Right cardiac atrium (tissue), 5 donors: ENCODE measurements at regions of chr12 and their contacts with region 1.

Region 1: DNA sequence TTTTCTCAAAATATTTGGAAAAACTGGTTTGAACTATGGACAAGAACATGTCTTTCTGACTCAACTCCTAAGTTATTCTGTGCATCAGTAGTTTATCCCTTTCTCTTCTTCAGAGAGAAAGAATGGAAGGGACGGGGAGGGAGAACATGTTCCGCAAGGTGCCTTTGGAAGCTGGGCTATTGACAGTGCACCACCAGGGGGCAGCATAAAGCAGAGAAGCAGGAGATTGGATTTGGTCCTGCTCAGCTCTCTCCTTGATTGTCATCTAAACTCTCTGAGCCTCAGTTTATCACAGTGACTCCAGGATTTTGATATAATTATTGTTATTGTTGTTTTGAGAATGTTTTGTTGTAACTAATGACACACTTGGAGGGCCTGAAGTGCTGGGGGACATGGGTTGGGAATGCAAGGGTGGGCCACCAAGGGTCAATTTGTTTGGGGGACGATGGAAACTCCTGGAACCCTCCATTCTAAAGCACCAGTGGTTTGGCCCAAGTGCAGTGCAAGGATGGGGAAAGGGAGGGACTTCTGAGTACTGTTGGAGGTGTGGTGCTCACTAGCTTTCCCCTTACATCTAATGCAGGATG is 45.3 kb upstream of the ANO6 start:
- DNase-seq: peak; percentile 81 to 87 (median 83)
- ATAC-seq: peak; percentile 77 to 82
- H3K4me3 ChIP-seq: no peak overlapping the region
- H3K27ac ChIP-seq: no peak overlapping the region
- H3K4me1 ChIP-seq: peaks cover 4% of the 10 kb centered on the region
- H3K27me3 ChIP-seq: no peaks in the 10 kb centered on the region

Region 2: DNA sequence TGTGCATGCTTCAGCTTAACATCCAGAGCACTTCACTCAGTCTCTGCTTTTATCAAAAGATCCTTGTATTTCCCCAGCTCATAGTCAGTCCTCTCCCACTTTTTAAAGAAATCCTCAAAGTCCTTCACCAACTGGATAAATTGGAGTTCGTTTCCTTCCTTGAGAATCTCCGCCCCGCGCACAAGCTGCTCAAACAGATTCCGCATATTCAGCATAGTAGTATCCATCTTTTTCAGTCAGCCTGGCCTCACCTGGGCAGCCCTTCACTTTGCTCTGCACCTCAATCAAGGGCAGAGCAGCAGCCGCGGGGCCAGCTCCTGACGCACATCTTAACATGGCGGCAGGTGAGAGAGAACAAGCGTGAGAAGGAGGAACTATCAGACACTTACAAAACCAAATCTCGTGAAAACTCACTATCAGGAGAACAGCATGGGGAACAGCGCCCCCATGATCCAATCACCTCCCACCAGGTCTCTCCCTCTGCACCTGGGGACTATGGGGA is 105.4 kb before region 1 on chr12:
- intact Hi-C with region 1: no loop called
- DNase-seq: no peak
- ATAC-seq: no peak
- H3K4me3 ChIP-seq: no peak overlapping the region
- H3K27ac ChIP-seq: no peak overlapping the region
- H3K4me1 ChIP-seq: no peaks in the 10 kb centered on the region
- H3K27me3 ChIP-seq: no peaks in the 10 kb centered on the region

Region 3: GRCh38 chr12:45388545-45388944 is 218.0 kb after region 1 on chr12:
- intact Hi-C with region 1: loop called in 3 of 4 experiments (anchors 5 to 10 kb)
- DNase-seq: no peak
- ATAC-seq: peak; percentile 63 to 74
- H3K4me3 ChIP-seq: no peak overlapping the region
- H3K27ac ChIP-seq: no peak overlapping the region
- H3K4me1 ChIP-seq: no peaks in the 10 kb centered on the region
- H3K27me3 ChIP-seq: no peaks in the 10 kb centered on the region